ENCODE measurements at regions of chr3 and their contacts with region 1.

Region 1: DNA sequence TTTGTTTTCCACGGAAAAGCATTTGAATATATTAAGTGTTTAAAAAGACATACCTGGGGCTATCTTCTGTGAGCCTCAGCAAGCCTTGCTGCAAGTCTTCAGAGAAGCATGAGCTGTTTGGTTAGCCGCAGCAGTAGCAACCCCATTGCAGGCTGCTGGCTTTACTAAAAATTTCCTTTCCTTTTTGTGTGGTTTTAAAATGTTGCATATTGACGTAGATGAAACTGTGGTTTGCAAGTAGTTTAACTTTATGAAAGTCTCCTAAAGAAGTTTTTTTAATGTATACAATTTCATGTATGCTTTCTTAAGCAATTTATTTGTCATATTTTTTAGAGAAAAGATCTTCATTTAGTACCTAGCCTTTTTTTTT is at the start of gene GPR171:
- DNase-seq: peak; percentile 82
- ATAC-seq: peak; percentile 66
- H3K4me3 Mint-ChIP-seq: peak within 1 kb of the TSS; percentile 83
- H3K27ac Mint-ChIP-seq: peak within 1 kb of the TSS; percentile 96
- H3K4me1 Mint-ChIP-seq: peaks cover 63% of the 10 kb centered on the region
- H3K27me3 Mint-ChIP-seq: no peaks in the 10 kb centered on the region
- total RNA-seq, gene GPR171: 84.9 to 111 TPM

Region 2: GRCh38 chr3:150603153-150603979 is 599.7 kb before region 1 on chr3 and contains the start of gene SELENOT:
- CTCF ChIA-PET with region 1: no interaction called
- POLR2A ChIA-PET with region 1: interaction called, 3 read pairs
- intact Hi-C with region 1: loop called in 1 of 2 experiments (anchors 10 kb)
- DNase-seq: peak; percentile 96
- ATAC-seq: peak; percentile 91
- H3K4me3 Mint-ChIP-seq: peak within 1 kb of the TSS; percentile 97
- H3K27ac Mint-ChIP-seq: peak within 1 kb of the TSS; percentile 98
- H3K4me1 Mint-ChIP-seq: peaks cover 68% of the 10 kb centered on the region
- H3K27me3 Mint-ChIP-seq: no peaks in the 10 kb centered on the region
- total RNA-seq, gene SELENOT: 88.6 to 134 TPM

Region 3: GRCh38 chr3:150787741-150788370 is 415.2 kb before region 1 on chr3:
- CTCF ChIA-PET with region 1: no interaction called
- POLR2A ChIA-PET with region 1: interaction called, 3 read pairs
- intact Hi-C with region 1: loop called (anchors 1 to 5 kb)
- DNase-seq: peak; percentile 94
- ATAC-seq: peak; percentile 50
- H3K4me3 Mint-ChIP-seq: peak overlapping the region; percentile 23
- H3K27ac Mint-ChIP-seq: peak overlapping the region; percentile 55
- H3K4me1 Mint-ChIP-seq: peaks cover 47% of the 10 kb centered on the region
- H3K27me3 Mint-ChIP-seq: peaks cover 10% of the 10 kb centered on the region

Region 4: DNA sequence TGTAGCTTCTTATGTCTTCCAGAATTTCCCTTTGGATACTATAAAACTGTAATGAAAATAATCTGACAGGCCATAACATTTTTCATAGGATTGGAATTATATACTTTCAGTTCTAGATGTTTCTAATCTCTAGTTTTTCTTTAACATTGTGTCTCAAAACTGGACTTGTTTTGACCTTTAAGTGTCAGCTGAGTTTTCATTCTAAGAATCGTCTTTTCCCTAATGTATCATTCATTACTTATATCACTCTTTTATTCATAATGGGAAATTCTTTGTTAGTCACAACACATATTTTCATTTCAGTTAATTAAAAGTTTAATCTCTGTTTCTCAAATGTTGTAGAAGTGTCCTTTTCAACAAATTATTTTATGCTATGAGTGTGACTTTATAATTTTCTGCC is 11.9 kb before region 1 on chr3:
- CTCF ChIA-PET with region 1: interaction called, 4 read pairs
- POLR2A ChIA-PET with region 1: interaction called, 6 read pairs
- intact Hi-C with region 1: loop called (anchors 1 kb)
- DNase-seq: no peak
- ATAC-seq: peak; percentile 58
- H3K4me3 Mint-ChIP-seq: peak overlapping the region; percentile 52
- H3K27ac Mint-ChIP-seq: peak overlapping the region; percentile 95
- H3K4me1 Mint-ChIP-seq: peaks cover 58% of the 10 kb centered on the region
- H3K27me3 Mint-ChIP-seq: no peaks in the 10 kb centered on the region

Region 5: GRCh38 chr3:151305101-151305750 is 102.2 kb after region 1 on chr3:
- CTCF ChIA-PET with region 1: interaction called, 3 read pairs
- POLR2A ChIA-PET with region 1: interaction called, 3 read pairs
- intact Hi-C with region 1: loop called (anchors 1 kb)
- DNase-seq: peak; percentile 51
- ATAC-seq: peak; percentile 80
- H3K4me3 Mint-ChIP-seq: peak overlapping the region; percentile 40
- H3K27ac Mint-ChIP-seq: peak overlapping the region; percentile 69
- H3K4me1 Mint-ChIP-seq: peaks cover 78% of the 10 kb centered on the region
- H3K27me3 Mint-ChIP-seq: peaks cover 14% of the 10 kb centered on the region

Region 6: GRCh38 chr3:152100491-152101132 is 897.6 kb after region 1 on chr3:
- CTCF ChIA-PET with region 1: no interaction called
- POLR2A ChIA-PET with region 1: no interaction called
- intact Hi-C with region 1: no loop called
- DNase-seq: no peak
- ATAC-seq: no peak
- H3K4me3 Mint-ChIP-seq: no peak overlapping the region
- H3K27ac Mint-ChIP-seq: no peak overlapping the region
- H3K4me1 Mint-ChIP-seq: peaks cover 3% of the 10 kb centered on the region
- H3K27me3 Mint-ChIP-seq: no peaks in the 10 kb centered on the region

Region 7: GRCh38 chr3:152241142-152242017 is 1038.3 kb after region 1 on chr3:
- CTCF ChIA-PET with region 1: no interaction called
- POLR2A ChIA-PET with region 1: interaction called, 3 read pairs
- intact Hi-C with region 1: loop called in 1 of 2 experiments (anchors 10 kb)
- DNase-seq: no peak
- ATAC-seq: peak; percentile 50
- H3K4me3 Mint-ChIP-seq: peak overlapping the region; percentile 88
- H3K27ac Mint-ChIP-seq: peak overlapping the region; percentile 95
- H3K4me1 Mint-ChIP-seq: peaks cover 61% of the 10 kb centered on the region
- H3K27me3 Mint-ChIP-seq: no peaks in the 10 kb centered on the region

Measured in activated CD4-positive, alpha-beta T cell treated with anti-CD3 and anti-CD28 coated beads for 36 hours (primary cell).